OCI-LY7 (cell line): ENCODE measurements at regions of chr7 and their contacts with region 1.

Region 1: DNA sequence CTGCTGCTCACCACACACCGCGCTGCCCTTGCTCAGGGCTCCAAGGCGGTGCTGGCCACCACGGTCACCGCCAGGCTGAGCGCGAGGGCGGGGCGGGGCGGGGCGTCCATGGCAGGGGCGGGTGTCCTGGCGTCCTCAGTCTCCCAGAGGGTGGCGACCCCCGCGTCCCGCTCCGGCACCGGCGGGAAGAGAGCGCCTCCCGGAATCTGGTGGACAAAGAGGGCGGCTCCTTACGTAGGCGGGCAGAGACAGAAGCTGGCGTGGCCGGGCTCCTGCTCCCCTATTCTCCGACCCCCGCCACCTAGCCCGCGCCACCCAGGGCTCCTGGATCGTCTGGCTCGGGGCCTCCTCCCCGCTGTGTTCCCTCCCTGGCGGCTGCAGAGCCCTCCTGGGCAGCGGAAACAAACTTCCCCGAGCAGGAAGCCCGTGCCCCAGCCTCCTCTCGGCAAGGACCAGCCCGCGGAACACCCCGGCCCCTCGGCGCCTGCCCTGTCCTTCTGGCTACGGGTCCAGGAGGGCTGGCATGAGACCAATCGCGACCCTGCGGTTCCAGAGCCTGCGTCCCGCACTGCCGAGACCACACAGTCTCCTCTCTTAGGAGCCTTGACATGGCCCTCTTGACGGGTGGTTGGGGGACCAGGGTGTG is 133.8 kb upstream of the ZNF92 start:
- DNase-seq: no peak
- H3K4me3 ChIP-seq: no peak overlapping the region
- H3K27ac ChIP-seq: no peak overlapping the region
- H3K4me1 ChIP-seq: no peaks in the 10 kb centered on the region
- CTCF ChIP-seq: no peak

Region 2: DNA sequence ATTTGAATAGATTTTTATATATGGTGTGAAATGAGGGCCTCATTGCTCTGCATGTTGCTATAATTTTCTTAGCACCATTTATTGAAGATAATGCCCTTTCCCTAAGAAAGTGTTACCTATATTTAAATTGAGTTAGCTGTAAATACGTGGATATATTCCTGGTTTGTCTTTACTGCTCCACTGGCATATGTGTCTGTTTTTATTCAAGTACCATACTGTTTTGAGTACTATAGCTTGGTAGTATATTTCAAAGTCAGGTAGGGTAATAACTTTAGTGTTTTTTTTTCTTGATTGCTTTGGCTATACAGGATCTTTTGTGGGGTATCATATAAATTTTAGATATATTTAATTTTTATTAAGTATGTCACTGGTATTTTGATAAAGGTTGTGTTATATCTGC is 305.4 kb before region 1 on chr7:
- CTCF ChIA-PET with region 1: no interaction called
- POLR2A ChIA-PET with region 1: interaction called, 12 read pairs
- intact Hi-C with region 1: no loop called
- DNase-seq: no peak
- H3K4me3 ChIP-seq: no peak overlapping the region
- H3K27ac ChIP-seq: no peak overlapping the region
- H3K4me1 ChIP-seq: no peaks in the 10 kb centered on the region
- CTCF ChIP-seq: no peak